ENCODE measurements at regions of chr11 and their contacts with region 1.

Region 1: DNA sequence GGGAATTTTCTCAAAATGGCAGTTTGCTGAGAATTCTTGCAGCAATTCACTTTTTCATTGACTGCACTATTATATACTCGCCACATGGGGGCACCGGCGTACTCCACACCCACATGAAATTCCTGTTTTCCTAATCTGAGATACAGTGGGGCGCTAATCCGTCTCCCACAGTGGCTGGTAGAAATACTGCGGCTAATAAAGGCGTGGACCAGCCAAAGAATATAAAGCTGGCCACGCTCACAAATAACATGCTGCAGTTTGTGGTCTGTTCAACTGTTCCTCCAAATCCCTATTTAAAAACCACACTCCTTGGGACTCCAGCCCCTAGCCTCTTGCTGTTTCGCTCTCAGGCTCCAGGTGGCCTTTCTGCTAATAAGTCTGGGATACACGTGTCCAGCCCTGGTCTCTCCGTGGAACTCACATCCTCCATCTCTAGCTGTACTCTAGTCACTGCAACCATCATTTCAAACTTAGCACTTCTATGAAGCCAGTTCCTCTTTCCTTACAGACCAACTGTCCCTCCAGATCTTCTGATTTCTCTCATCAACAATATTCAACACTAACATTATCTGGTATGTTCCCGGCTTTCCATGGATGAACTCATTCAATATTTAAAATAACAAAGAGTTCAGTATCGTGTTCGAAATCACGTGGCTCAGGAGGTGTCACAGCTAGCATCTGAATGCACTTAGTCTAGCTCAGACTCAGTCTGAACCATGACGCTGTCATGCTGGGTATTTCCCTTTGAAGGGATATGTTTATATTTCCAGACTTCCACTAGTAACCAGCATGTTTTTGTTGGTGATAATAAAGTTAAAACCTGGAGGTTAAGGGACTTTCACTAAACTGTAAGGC is 22.0 kb downstream of the TBRG1 start:
- DNase-seq: peak in 4 of 5 donors; percentile 25 to 36 (median 31)
- H3K4me3 ChIP-seq: no peak overlapping the region
- H3K4me3 Mint-ChIP-seq: no peak overlapping the region
- H3K27ac ChIP-seq: no peak overlapping the region
- H3K27ac Mint-ChIP-seq: no peak overlapping the region
- H3K4me1 ChIP-seq: peaks cover 4% of the 10 kb centered on the region
- H3K4me1 Mint-ChIP-seq: peaks cover 0 to 4% (median under 1%) of the 10 kb centered on the region in 4 donors
- H3K27me3 ChIP-seq: no peaks in the 10 kb centered on the region
- H3K27me3 Mint-ChIP-seq: no peaks in the 10 kb centered on the region

Region 2: GRCh38 chr11:124346556-124346955 is 298.1 kb before region 1 on chr11:
- CTCF ChIA-PET with region 1: no interaction called
- POLR2A ChIA-PET with region 1: no interaction called
- intact Hi-C with region 1: no loop called
- DNase-seq: no peak
- H3K4me3 ChIP-seq: no peak overlapping the region
- H3K4me3 Mint-ChIP-seq: no peak overlapping the region
- H3K27ac ChIP-seq: no peak overlapping the region
- H3K27ac Mint-ChIP-seq: no peak overlapping the region
- H3K4me1 ChIP-seq: no peaks in the 10 kb centered on the region
- H3K4me1 Mint-ChIP-seq: no peaks in the 10 kb centered on the region
- H3K27me3 ChIP-seq: no peaks in the 10 kb centered on the region
- H3K27me3 Mint-ChIP-seq: no peaks in the 10 kb centered on the region

Region 3: DNA sequence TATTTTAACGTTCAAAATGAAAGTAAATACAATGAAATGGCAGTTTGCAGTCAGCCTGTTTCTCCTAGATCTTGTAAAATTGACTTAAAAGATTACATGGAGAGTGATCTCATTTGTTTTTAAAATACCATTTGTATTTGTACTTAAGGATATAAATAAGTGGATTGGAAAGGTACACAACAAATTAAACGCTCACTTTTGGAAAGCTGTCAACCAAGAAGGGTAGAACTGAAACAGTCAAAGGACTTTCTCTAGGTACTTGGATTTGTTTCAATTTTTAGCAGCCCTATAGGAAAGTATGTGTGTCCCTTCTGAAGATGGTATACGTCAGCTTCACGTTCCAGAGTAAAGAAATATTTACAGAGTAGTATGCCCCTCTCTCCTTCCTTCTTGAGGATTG is 14.7 kb before region 1 on chr11:
- CTCF ChIA-PET with region 1: interaction called, 22 read pairs
- POLR2A ChIA-PET with region 1: interaction called, 3 read pairs
- intact Hi-C with region 1: no loop called
- DNase-seq: no peak
- H3K4me3 ChIP-seq: no peak overlapping the region
- H3K4me3 Mint-ChIP-seq: no peak overlapping the region
- H3K27ac ChIP-seq: no peak overlapping the region
- H3K27ac Mint-ChIP-seq: peak overlapping the region in 3 of 7 donors; percentile 30 to 48 (median 32)
- H3K4me1 ChIP-seq: peaks cover 10% of the 10 kb centered on the region
- H3K4me1 Mint-ChIP-seq: peaks cover 7 to 30% (median 18%) of the 10 kb centered on the region in 4 donors
- H3K27me3 ChIP-seq: no peaks in the 10 kb centered on the region
- H3K27me3 Mint-ChIP-seq: no peaks in the 10 kb centered on the region

Region 4: DNA sequence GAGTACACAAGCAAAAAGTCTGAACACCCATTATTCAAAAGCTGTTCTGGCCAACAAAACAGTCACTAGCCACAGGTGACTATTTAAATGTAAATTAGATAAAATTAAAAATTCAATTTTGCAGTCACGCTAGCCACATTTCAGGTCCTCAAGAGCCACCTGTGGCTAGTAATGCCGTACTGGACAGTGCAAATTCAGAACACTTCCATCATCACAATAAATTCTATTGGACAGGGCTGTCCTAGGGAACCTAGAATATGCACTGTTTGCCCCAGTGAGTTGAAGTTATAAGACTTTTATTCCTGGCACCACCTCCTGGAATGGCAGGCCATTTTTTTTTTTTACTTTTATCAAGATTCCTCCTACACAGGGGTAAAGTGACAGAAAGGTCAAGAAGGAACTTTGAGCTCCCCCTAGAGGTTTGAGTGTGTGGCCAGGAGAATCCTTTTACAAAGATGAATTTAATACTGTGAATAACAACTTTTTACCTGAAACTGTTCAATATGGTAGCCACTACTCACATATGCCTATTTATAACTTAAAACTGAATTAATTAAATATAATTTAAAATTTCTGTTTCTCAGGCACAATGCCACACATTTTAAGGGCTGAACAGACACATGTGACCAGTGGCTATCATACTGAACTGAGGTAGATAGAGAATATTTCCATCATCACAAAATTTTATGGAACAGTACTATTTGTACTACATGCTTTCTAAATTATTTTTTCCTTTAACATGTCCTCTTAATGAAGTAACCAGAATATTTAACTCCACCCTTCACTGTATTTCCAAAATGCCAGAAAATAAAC is 149.0 kb after region 1 on chr11:
- CTCF ChIA-PET with region 1: interaction called, 11 read pairs
- POLR2A ChIA-PET with region 1: no interaction called
- intact Hi-C with region 1: no loop called
- DNase-seq: peak in 4 of 5 donors; percentile 30 to 46 (median 36)
- H3K4me3 ChIP-seq: no peak overlapping the region
- H3K4me3 Mint-ChIP-seq: no peak overlapping the region
- H3K27ac ChIP-seq: no peak overlapping the region
- H3K27ac Mint-ChIP-seq: no peak overlapping the region
- H3K4me1 ChIP-seq: peaks cover 12% of the 10 kb centered on the region
- H3K4me1 Mint-ChIP-seq: peaks cover 15 to 47% (median 26%) of the 10 kb centered on the region in 4 donors
- H3K27me3 ChIP-seq: no peaks in the 10 kb centered on the region
- H3K27me3 Mint-ChIP-seq: no peaks in the 10 kb centered on the region

Region 5: DNA sequence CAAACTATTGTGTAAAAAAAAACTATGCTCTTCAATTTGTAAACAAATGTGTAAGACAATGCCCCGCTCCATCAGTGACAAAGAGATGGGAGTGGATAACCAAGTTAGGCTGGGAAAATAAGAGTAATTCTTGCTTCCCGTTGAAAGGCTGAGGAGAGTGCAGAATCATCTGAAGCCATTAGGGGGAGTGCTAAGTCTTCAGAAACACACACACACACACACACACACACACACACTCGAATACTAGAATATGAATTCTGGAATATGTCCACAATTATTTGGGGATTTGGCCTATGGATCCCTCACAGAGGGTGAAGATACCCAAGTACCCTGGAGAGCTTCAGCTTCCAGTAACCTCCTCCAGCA is 192.8 kb after region 1 on chr11:
- CTCF ChIA-PET with region 1: interaction called, 31 read pairs
- POLR2A ChIA-PET with region 1: no interaction called
- intact Hi-C with region 1: loop called (anchors 1 kb)
- DNase-seq: peak in 1 of 5 donors; percentile 10
- H3K4me3 ChIP-seq: no peak overlapping the region
- H3K4me3 Mint-ChIP-seq: peak overlapping the region in 1 of 8 donors; percentile 84
- H3K27ac ChIP-seq: no peak overlapping the region
- H3K27ac Mint-ChIP-seq: peak overlapping the region in 1 of 7 donors; percentile 74
- H3K4me1 ChIP-seq: peaks cover 10% of the 10 kb centered on the region
- H3K4me1 Mint-ChIP-seq: peaks cover 8 to 21% (median 14%) of the 10 kb centered on the region in 4 donors
- H3K27me3 ChIP-seq: peaks cover 41% of the 10 kb centered on the region
- H3K27me3 Mint-ChIP-seq: peaks cover 43 to 70% of the 10 kb centered on the region in 2 donors

Region 6: GRCh38 chr11:124865921-124866583 is 221.4 kb after region 1 on chr11:
- CTCF ChIA-PET with region 1: interaction called, 3 read pairs
- POLR2A ChIA-PET with region 1: no interaction called
- intact Hi-C with region 1: loop called (anchors 1 kb)
- DNase-seq: peak in 4 of 5 donors; percentile 42 to 52 (median 44)
- H3K4me3 ChIP-seq: no peak overlapping the region
- H3K4me3 Mint-ChIP-seq: peak overlapping the region in 5 of 8 donors; percentile 35 to 71 (median 44)
- H3K27ac ChIP-seq: no peak overlapping the region
- H3K27ac Mint-ChIP-seq: no peak overlapping the region
- H3K4me1 ChIP-seq: peaks cover 39% of the 10 kb centered on the region
- H3K4me1 Mint-ChIP-seq: peaks cover 26 to 70% (median 47%) of the 10 kb centered on the region in 4 donors
- H3K27me3 ChIP-seq: peaks cover 78% of the 10 kb centered on the region
- H3K27me3 Mint-ChIP-seq: peaks cover 73 to 77% of the 10 kb centered on the region in 2 donors